ENCODE measurements at regions of chr12 and their contacts with region 1.

Region 1: DNA sequence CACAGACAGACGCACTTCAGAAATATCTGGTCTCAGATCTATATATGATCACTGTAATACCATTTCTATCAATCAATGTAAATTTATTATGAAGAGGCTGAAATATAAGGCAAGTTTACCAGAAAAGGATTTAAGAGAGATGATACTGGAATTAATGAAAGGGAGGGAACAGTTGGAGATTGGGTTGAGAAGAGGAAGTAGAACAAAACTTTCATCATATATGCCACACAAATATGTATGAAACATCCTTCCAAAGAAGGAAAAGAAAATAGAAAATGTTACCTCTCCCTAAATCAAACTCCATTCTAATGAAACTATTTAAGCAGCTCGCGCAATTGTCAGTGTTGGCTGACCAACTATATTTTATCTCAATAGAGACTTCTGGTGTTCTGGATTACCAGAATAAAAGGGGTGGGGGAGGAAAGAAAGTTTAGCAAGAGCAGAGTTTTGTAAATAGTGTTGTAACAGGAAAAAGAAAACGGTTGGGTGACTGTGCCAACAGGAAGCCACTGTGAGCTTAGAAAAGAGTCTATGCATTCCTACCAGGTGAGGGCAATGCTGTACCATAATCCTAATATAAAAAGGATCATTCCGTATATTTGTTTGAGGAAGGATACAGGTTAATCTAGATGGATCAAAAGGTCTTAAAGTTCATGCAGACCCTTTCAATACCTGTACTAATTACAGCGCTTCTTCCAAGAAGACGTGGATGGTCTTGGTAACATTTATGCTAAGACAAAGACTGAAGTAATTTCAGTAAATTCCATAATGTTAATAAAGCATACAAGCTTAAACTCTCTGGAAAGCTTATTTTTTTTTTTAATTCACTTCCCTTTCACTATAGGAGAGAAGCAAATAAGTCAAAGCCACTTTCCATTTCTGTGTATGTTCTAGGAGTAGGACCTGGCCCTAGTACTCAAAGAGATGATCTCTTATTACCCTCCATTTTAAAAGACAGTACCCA is 14.5 kb upstream of the LLPH start:
- DNase-seq: no peak
- H3K4me3 ChIP-seq: no peak overlapping the region
- H3K27ac ChIP-seq: peak overlapping the region; percentile 18
- H3K4me1 ChIP-seq: no peaks in the 10 kb centered on the region
- H3K27me3 ChIP-seq: no peaks in the 10 kb centered on the region
- CTCF ChIP-seq: peak; percentile 39 to 60 (median 57)
- POLR2A ChIP-seq: no peak

Region 2: GRCh38 chr12:66196806-66197205 is 51.7 kb after region 1 on chr12:
- intact Hi-C with region 1: no loop called
- DNase-seq: no peak
- H3K4me3 ChIP-seq: no peak overlapping the region
- H3K27ac ChIP-seq: peak overlapping the region; percentile 28
- H3K4me1 ChIP-seq: peaks cover 15% of the 10 kb centered on the region
- H3K27me3 ChIP-seq: no peaks in the 10 kb centered on the region
- CTCF ChIP-seq: no peak
- POLR2A ChIP-seq: no peak

Region 3: DNA sequence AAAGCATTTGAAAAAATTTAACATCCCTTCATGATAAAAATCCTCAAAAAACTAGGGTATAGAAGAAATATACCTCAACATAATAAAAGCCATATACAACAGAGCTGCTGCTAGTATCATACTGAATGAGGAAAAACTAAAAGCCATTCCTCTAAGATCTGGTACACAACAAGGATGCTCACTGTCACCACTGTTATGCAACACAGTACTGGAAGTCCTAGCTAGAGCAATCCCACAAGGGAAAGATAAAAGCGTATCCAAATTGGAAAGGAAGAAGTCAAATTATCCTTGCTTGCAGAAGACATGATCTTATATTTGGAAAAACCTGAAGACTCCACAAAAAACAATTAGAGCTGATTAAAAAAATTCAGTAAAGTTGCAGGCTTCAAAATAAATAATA is 272.1 kb after region 1 on chr12:
- intact Hi-C with region 1: loop called (anchors 10 kb)
- DNase-seq: no peak
- H3K4me3 ChIP-seq: no peak overlapping the region
- H3K27ac ChIP-seq: no peak overlapping the region
- H3K4me1 ChIP-seq: no peaks in the 10 kb centered on the region
- H3K27me3 ChIP-seq: no peaks in the 10 kb centered on the region
- CTCF ChIP-seq: no peak
- POLR2A ChIP-seq: no peak

Measured in vagina (tissue), 2 donors.